ENCODE measurements at regions of chr18 and their contacts with region 1.

Region 1: DNA sequence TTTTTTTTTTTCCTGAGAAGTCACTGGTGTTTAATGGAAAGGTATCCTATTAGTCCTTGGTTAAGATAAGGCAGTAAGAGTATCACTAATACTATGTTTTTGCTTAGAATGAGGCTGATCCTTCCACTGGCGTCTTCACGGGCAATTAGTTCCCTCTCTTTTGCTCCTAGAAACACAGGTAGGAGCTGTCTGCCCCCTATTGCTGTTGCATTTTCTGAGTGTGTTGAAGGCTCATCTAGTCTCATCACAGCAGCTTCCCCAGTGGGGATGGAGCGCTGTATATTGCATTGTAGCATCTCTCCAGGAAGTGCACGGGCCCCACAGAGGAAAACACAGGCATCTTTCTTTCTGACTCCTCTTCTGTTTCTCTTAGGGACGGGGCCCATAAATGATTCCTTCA is 145.0 kb downstream of the NAPG start:
- DNase-seq: no peak
- H3K4me3 Mint-ChIP-seq: no peak overlapping the region
- H3K27ac Mint-ChIP-seq: no peak overlapping the region
- H3K4me1 Mint-ChIP-seq: no peaks in the 10 kb centered on the region
- H3K27me3 Mint-ChIP-seq: peaks cover 32% of the 10 kb centered on the region
- CTCF ChIP-seq: no peak

Region 2: GRCh38 chr18:10705786-10706185 is 34.9 kb after region 1 on chr18:
- CTCF ChIA-PET with region 1: no interaction called
- intact Hi-C with region 1: loop called (anchors 5 kb)
- DNase-seq: no peak
- H3K4me3 Mint-ChIP-seq: no peak overlapping the region
- H3K27ac Mint-ChIP-seq: no peak overlapping the region
- H3K4me1 Mint-ChIP-seq: no peaks in the 10 kb centered on the region
- H3K27me3 Mint-ChIP-seq: peaks cover 16% of the 10 kb centered on the region
- CTCF ChIP-seq: no peak

Measured in Calu3 (cell line).